Activated naive CD4-positive, alpha-beta T cell treated with anti-CD3 and anti-CD28 coated beads for 36 hours (primary cell): ENCODE measurements at regions of chr10 and their contacts with region 1.

Region 1: DNA sequence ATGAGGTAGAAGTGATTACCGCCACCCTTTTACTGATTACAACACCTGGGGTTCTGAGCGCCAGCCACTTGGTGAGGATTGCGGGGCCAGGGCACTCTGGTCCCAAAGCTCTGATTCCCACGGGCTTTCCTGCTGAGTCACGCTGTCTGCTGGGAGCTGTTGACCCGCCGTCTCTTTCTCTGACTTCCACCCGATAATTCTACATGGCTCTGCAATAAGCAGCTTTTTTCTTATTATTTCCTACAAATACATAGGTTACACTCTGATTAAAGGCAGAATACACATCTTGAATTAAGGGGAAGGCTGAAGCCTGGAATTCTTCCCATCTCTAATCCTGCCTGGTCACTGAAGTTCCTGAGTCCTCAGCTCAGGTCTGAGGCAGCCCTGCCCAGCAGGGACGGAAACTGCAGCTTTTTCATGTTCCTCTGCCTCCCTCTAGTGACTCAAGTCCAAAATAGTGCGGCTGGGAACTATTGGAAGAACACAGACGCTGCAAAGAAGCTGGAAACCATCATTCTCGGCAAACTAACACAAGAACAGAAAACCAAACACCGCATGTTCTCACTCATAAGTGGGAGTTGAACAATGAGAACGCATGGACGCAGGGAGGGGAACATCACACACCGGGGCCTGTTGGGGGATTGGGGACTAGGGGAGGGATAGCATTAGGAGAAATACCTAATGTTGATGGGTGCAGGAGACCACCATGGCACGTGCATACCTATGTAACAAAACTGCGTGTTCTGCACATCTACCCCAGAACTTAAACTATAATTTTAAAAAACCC is 178.3 kb downstream of the PRKCQ start:
- DNase-seq: peak; percentile 75
- H3K4me3 Mint-ChIP-seq: no peak overlapping the region
- H3K27ac Mint-ChIP-seq: no peak overlapping the region
- H3K4me1 Mint-ChIP-seq: peaks cover 14% of the 10 kb centered on the region
- H3K27me3 Mint-ChIP-seq: peaks cover 2% of the 10 kb centered on the region

Region 2: DNA sequence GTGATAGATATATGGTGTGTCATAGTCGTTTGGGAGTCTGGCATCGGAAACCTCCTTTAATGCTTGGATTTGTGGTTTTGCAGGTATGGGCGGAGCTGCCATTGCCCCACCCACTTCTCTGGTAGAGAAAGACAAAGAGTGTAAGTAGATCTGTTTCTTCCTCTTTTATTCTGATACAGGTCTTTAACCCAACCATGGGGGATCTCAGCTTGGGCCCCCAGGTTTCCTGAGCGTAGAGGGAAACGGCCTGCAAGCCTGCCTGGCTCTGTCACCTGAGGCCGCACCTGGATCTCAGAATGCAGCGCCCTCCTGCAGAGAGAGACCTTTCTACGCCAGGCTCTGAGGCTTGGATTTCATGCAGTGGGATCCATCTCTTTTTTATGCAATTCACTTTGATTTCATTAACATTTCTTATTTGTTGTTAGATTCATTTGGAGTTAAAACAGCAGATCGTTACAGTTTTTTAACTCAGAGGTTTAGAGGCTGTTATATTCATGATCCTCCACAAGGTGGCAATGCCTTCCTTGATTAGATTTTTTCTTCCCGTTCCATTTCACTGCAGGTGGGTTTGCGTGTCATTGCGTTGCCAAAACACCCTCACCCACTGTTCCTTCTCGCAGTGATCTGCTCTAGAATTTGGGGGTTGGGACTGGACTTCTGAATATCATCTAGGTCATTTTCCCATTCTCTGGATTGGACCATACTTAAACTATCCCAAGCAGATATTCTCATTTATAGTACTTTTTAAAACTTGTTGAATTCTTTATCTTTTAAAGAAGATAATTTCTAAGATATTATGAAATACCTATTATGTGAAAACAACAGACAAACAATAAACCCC is 292.9 kb before region 1 on chr10:
- CTCF ChIA-PET with region 1: interaction called, 27 read pairs
- intact Hi-C with region 1: loop called (anchors 1 kb)
- DNase-seq: peak; percentile 36
- H3K4me3 Mint-ChIP-seq: no peak overlapping the region
- H3K27ac Mint-ChIP-seq: peak overlapping the region; percentile 66
- H3K4me1 Mint-ChIP-seq: peaks cover 21% of the 10 kb centered on the region
- H3K27me3 Mint-ChIP-seq: no peaks in the 10 kb centered on the region

Region 3: GRCh38 chr10:6239213-6239991 is 162.4 kb before region 1 on chr10:
- CTCF ChIA-PET with region 1: interaction called, 19 read pairs
- intact Hi-C with region 1: no loop called
- DNase-seq: peak; percentile 90
- H3K4me3 Mint-ChIP-seq: no peak overlapping the region
- H3K27ac Mint-ChIP-seq: peak overlapping the region; percentile 60
- H3K4me1 Mint-ChIP-seq: peaks cover 23% of the 10 kb centered on the region
- H3K27me3 Mint-ChIP-seq: no peaks in the 10 kb centered on the region

Region 4: DNA sequence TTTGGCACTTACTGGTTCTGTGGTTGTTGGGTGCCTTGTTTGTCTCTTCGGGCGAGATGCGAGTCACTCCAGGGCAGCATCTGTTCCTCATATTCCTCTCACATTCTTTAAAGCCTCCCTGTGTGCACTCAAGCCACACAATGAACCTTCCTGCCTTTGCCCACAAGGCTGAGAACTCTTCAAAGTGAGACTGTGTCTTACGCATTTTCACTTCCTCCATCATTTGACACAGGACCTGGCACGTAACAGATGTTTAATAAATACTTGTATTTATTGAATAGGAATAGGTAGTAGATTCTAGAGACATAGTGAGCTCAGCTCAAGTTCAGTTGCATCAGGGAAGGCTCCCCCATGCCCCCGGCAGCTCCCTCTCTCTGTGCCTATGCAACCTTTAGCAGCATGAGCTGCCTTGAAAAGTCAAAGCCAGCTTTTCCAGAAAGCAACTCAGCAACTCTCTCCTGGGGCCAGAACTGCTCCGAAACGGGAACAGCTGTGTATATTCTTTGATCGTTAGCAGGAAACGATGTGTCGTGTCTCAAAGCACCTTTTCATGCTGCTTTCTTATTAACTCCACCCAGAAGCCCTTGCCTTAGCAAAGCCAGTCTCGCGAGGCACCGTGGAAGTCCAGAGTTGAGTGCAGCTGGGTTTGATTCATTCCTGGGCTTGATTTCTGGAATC is 101.5 kb before region 1 on chr10:
- CTCF ChIA-PET with region 1: interaction called, 6 read pairs
- intact Hi-C with region 1: loop called (anchors 5 kb)
- DNase-seq: peak; percentile 79
- H3K4me3 Mint-ChIP-seq: peak overlapping the region; percentile 35
- H3K27ac Mint-ChIP-seq: peak overlapping the region; percentile 91
- H3K4me1 Mint-ChIP-seq: peaks cover 51% of the 10 kb centered on the region
- H3K27me3 Mint-ChIP-seq: no peaks in the 10 kb centered on the region

Region 5: GRCh38 chr10:6382081-6382480 is 19.7 kb before region 1 on chr10:
- CTCF ChIA-PET with region 1: interaction called, 19 read pairs
- intact Hi-C with region 1: no loop called
- DNase-seq: peak; percentile 80
- H3K4me3 Mint-ChIP-seq: peak overlapping the region; percentile 38
- H3K27ac Mint-ChIP-seq: peak overlapping the region; percentile 70
- H3K4me1 Mint-ChIP-seq: peaks cover 27% of the 10 kb centered on the region
- H3K27me3 Mint-ChIP-seq: no peaks in the 10 kb centered on the region